OCI-LY7 (cell line): ENCODE measurements at regions of chr7 and their contacts with region 1.

Region 1: DNA sequence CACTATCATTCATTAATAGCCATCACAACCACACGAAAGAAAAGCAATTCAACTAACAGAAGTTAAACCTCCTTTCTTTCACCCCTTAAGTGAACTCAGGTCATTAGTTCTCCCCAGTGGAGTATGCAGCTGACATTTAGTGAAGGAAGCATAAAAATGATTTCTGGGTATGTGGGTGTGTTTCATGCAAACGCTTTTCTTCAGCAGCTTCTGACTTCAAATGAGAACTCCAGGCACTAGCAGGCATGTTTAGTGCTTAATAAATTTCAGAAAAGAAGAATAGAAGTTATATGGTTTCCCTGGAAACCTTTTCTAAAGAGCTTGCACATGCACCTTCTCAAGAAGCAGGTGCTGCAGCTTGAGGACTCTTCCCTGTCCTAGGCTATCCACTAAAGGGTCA is 62.5 kb downstream of the PIK3CG start:
- DNase-seq: no peak
- H3K4me3 ChIP-seq: no peak overlapping the region
- H3K27ac ChIP-seq: no peak overlapping the region
- H3K4me1 ChIP-seq: peaks cover 3% of the 10 kb centered on the region
- CTCF ChIP-seq: no peak

Region 2: GRCh38 chr7:106671160-106671559 is 256.4 kb before region 1 on chr7:
- CTCF ChIA-PET with region 1: no interaction called
- POLR2A ChIA-PET with region 1: no interaction called
- intact Hi-C with region 1: loop called (anchors 5 kb)
- DNase-seq: no peak
- H3K4me3 ChIP-seq: no peak overlapping the region
- H3K27ac ChIP-seq: no peak overlapping the region
- H3K4me1 ChIP-seq: no peaks in the 10 kb centered on the region
- CTCF ChIP-seq: no peak

Region 3: DNA sequence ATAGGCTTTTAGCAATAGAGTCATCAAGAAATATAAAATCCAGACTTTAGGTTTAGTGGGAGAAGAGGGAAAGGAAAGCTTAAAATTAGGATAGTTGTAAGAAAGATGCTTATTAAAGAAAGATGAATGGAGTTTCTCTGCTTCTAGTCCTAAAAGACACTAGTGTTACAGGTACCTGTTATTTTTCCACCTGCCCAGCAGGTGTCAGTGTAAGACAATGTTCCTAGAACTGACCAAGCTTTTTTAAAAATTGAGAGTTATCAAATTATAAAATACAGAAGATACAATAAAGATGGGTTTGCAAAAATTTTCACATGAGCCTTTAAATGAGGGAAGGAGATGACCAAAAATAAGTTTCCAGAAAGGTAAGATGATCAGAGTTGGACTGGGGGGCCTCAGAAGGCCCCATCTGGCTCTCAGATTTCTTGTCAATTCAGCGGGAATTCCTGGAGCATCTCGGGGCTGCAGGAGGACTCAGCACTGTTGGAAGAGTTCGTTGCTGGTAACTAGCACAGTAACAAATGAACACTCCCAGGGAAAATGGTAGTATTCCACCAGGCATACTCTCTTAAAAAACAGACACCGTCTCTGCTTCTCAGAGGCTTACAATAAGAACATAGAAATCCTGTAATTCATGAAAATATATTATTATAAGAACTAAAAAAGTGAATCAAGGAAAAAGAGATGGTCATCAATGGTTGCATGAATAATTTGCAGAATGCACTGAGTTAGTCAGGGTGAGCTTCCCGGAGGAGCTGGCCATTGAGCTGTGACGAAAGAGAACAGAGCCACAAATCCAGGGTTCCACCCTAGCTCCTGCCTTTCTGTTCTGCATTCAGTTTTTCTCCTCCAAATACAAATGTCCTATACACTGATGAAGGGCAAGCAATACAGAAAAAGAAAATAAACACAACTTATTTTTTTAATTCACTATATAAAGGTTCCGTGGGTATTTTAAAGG is 134.2 kb before region 1 on chr7:
- CTCF ChIA-PET with region 1: no interaction called
- POLR2A ChIA-PET with region 1: no interaction called
- intact Hi-C with region 1: loop called (anchors 5 kb)
- DNase-seq: peak; percentile 70
- H3K4me3 ChIP-seq: no peak overlapping the region
- H3K27ac ChIP-seq: no peak overlapping the region
- H3K4me1 ChIP-seq: no peaks in the 10 kb centered on the region
- CTCF ChIP-seq: peak; percentile 96

Region 4: DNA sequence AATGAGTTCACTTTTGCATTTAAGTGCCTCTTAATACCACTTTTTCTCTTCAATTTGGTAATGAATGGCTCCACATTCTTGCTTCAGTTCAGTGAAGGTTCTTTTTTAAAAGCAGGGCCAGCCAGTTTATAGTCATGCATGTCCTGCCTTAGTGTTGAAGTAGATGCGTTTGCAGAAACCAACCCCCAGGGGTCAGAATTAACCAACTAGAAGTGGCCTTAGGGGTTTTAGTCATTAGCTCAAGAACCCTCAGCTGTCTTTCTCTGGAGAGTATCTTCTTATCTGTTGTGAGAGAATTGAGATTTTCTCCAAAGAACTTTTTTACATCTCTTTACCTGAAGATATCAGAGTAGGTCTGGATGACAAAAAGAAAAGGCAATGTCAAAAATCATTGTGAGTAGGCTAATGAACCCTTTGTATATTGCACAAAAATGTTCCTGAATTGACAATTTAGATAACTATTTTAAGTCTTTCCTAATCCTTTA is 19.8 kb after region 1 on chr7:
- CTCF ChIA-PET with region 1: no interaction called
- POLR2A ChIA-PET with region 1: no interaction called
- intact Hi-C with region 1: no loop called
- DNase-seq: peak; percentile 92
- H3K4me3 ChIP-seq: no peak overlapping the region
- H3K27ac ChIP-seq: no peak overlapping the region
- H3K4me1 ChIP-seq: peaks cover 18% of the 10 kb centered on the region
- CTCF ChIP-seq: peak; percentile 99